Head of caudate nucleus (tissue), 42 donors: ENCODE measurements at regions of chr1 and their contacts with region 1.

Region 1: GRCh38 chr1:22416555-22417454 is 34.8 kb upstream of the ZBTB40 start:
- DNase-seq: peak; percentile 60 to 90 (median 78)

Region 2: GRCh38 chr1:22114083-22115012 is 302.5 kb before region 1 on chr1:
- intact Hi-C with region 1: loop called (anchors 10 kb)
- DNase-seq: peak in 15 of 42 donors; percentile 25 to 69 (median 43)

Region 3: GRCh38 chr1:22507587-22507986 is 90.8 kb after region 1 on chr1:
- intact Hi-C with region 1: no loop called
- DNase-seq: no peak

Region 4: GRCh38 chr1:22628698-22629446 is 212.1 kb after region 1 on chr1:
- intact Hi-C with region 1: no loop called
- DNase-seq: no peak

Region 5: DNA sequence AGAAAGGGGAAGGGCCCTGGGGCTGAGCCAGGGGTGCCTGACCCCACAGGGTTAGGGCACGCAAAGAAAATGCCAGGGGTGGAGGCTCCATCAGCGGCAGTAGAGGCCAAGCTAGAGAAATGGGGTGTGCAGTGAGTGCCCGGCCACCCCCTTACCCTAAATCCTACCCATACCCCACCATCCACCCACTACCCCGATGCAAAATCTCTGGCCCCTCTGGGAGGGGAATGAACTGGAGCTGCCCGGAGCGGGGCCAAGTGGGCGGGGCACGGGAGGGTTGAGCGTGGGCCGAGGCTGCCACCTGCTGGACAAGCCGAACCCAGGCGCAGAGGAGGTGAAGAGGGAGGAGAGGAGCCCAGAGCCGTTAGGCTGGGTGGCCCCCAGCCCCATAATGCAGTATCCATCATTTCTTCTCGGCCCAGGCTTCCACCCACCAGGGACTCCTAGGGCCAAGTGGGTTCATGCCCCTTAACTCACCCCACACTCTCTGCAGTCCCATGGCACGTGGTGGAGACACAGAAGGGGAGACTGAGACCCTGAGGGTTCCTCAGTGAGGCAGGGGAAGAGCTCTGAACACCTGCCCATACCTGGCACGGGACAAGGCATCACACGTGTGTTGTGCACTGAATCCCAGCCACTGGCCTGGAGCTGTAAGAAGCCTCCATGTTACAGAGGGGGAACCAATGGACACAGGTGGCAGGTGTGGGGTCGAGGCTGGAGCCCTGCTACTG is 225.3 kb after region 1 on chr1:
- intact Hi-C with region 1: loop called (anchors 2 kb)
- DNase-seq: peak; percentile 66 to 94 (median 88)